ENCODE measurements at regions of chr21 and their contacts with region 1.

Region 1: GRCh38 chr21:36917471-36918158 is 48.9 kb downstream of the HLCS start:
- DNase-seq: peak; percentile 75
- ATAC-seq: peak; percentile 81
- H3K4me3 ChIP-seq: no peak overlapping the region
- H3K27ac ChIP-seq: peak overlapping the region; percentile 36; the same call in 1 of the 2 replicates
- H3K4me1 ChIP-seq: peaks cover 16% of the 10 kb centered on the region
- H3K27me3 ChIP-seq: no peaks in the 10 kb centered on the region
- CTCF ChIP-seq: peak; percentile 82
- POLR2A ChIP-seq: no peak
- RAD21 ChIP-seq: peak; percentile 88

Region 2: GRCh38 chr21:36661511-36662309 is 255.9 kb before region 1 on chr21:
- CTCF ChIA-PET with region 1: interaction called, 10 read pairs
- POLR2A ChIA-PET with region 1: no interaction called
- dilution Hi-C with region 1: no loop called
- in situ Hi-C with region 1: no loop called
- intact Hi-C with region 1: loop called (anchors 2 kb)
- DNase-seq: peak; percentile 48
- ATAC-seq: peak; percentile 75
- H3K4me3 ChIP-seq: no peak overlapping the region
- H3K27ac ChIP-seq: no peak overlapping the region
- H3K4me1 ChIP-seq: peaks cover 3% of the 10 kb centered on the region; the same call in 1 of the 2 replicates
- H3K27me3 ChIP-seq: peaks cover 30% of the 10 kb centered on the region
- CTCF ChIP-seq: peak; percentile 67
- POLR2A ChIP-seq: no peak
- RAD21 ChIP-seq: peak; percentile 67

Region 3: GRCh38 chr21:36700971-36701755 is 216.5 kb before region 1 on chr21:
- CTCF ChIA-PET with region 1: no interaction called
- POLR2A ChIA-PET with region 1: no interaction called
- dilution Hi-C with region 1: no loop called
- in situ Hi-C with region 1: no loop called
- intact Hi-C with region 1: loop called (anchors 5 kb)
- DNase-seq: no peak
- ATAC-seq: no peak
- H3K4me3 ChIP-seq: peak overlapping the region; percentile 57
- H3K27ac ChIP-seq: peak overlapping the region; percentile 63
- H3K4me1 ChIP-seq: no peaks in the 10 kb centered on the region
- H3K27me3 ChIP-seq: peaks cover 95% of the 10 kb centered on the region
- CTCF ChIP-seq: no peak
- POLR2A ChIP-seq: no peak
- RAD21 ChIP-seq: no peak

Region 4: GRCh38 chr21:36753556-36753955 is 164.1 kb before region 1 on chr21:
- CTCF ChIA-PET with region 1: interaction called, 5 read pairs
- POLR2A ChIA-PET with region 1: no interaction called
- dilution Hi-C with region 1: no loop called
- in situ Hi-C with region 1: no loop called
- intact Hi-C with region 1: loop called (anchors 2 kb)
- DNase-seq: peak; percentile 87
- ATAC-seq: peak; percentile 89
- H3K4me3 ChIP-seq: no peak overlapping the region
- H3K27ac ChIP-seq: no peak overlapping the region
- H3K4me1 ChIP-seq: peaks cover 13% of the 10 kb centered on the region
- H3K27me3 ChIP-seq: no peaks in the 10 kb centered on the region
- CTCF ChIP-seq: no peak
- POLR2A ChIP-seq: no peak
- RAD21 ChIP-seq: peak; percentile 15

Region 5: GRCh38 chr21:36934864-36935420 is 17.3 kb after region 1 on chr21:
- CTCF ChIA-PET with region 1: no interaction called
- POLR2A ChIA-PET with region 1: no interaction called
- dilution Hi-C with region 1: no loop called
- in situ Hi-C with region 1: no loop called
- intact Hi-C with region 1: no loop called
- DNase-seq: no peak
- ATAC-seq: no peak
- H3K4me3 ChIP-seq: no peak overlapping the region
- H3K27ac ChIP-seq: no peak overlapping the region
- H3K4me1 ChIP-seq: no peaks in the 10 kb centered on the region
- H3K27me3 ChIP-seq: no peaks in the 10 kb centered on the region
- CTCF ChIP-seq: no peak
- POLR2A ChIP-seq: no peak
- RAD21 ChIP-seq: no peak

Region 6: GRCh38 chr21:37117204-37117603 is 199.6 kb after region 1 on chr21:
- CTCF ChIA-PET with region 1: no interaction called
- POLR2A ChIA-PET with region 1: no interaction called
- dilution Hi-C with region 1: no loop called
- in situ Hi-C with region 1: no loop called
- intact Hi-C with region 1: no loop called
- DNase-seq: no peak
- ATAC-seq: no peak
- H3K4me3 ChIP-seq: no peak overlapping the region
- H3K27ac ChIP-seq: no peak overlapping the region
- H3K4me1 ChIP-seq: 0 out of 2 replicates have a peak, but pooled peaks cover 1% of the 10 kb centered on the region
- H3K27me3 ChIP-seq: no peaks in the 10 kb centered on the region
- CTCF ChIP-seq: no peak
- POLR2A ChIP-seq: no peak
- RAD21 ChIP-seq: no peak

Measured in IMR-90 (cell line).